ENCODE measurements at regions of chr19 and their contacts with region 1.

Region 1: GRCh38 chr19:58182989-58183816 is at the start of gene ZNF274:
- DNase-seq: peak; percentile 96 to 98
- ATAC-seq: peak; percentile 96
- H3K4me3 ChIP-seq: peak within 1 kb of the TSS; percentile 83
- H3K27ac ChIP-seq: peak within 1 kb of the TSS; percentile 92 to 94
- H3K4me1 ChIP-seq: no peaks in the 10 kb centered on the region
- CTCF ChIP-seq: no peak; the same call in 2 of the 3 replicates
- EP300 ChIP-seq: no peak
- POLR2A ChIP-seq: peak; percentile 72
- RAD21 ChIP-seq: 0 out of 5 replicates have a peak, but pooled peaks of 1 of the 2 experiments have one; percentile 22
- polyA plus RNA-seq, gene ZNF274: 27.3 and 28.7 TPM in 2 replicates

Region 2: DNA sequence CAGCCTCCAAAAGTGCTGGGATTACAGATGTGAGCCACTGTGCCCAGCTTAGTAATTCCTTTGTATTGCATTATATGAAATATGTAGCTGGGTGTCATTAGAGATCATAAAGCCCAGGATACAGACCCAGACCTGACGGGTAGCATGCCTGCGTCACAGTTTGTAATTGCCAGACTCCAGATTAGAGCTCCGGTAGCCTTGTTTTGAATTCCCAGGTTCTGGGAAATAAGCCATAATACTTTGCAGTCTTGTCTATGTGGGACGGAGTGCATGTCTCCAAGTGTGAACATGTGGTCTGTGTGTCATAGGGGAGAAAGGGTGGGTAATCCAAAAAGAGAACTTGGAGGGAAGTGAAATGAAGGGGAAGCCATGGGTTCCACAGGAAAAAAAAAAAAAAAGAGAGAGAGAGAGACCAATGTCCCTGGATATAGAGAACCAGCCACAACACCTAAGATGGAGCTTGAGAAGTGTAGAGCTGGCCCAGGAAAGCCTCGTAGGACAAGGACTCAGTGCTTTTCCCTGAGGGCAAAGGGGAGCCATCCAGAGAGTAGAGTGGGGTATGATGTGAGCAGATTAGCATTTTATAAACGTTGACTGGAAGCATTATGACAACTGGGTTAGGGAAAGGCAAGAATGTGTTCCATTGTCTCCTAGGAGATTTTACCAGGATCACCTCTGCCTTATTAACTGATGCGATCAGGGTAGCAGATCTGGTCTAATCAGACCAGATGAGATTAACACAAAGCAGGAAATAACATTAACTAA is 511.9 kb before region 1 on chr19:
- CTCF ChIA-PET with region 1: no interaction called
- POLR2A ChIA-PET with region 1: interaction called, 10 read pairs
- DNase-seq: no peak
- ATAC-seq: no peak
- H3K4me3 ChIP-seq: no peak overlapping the region
- H3K27ac ChIP-seq: no peak overlapping the region
- H3K4me1 ChIP-seq: no peaks in the 10 kb centered on the region
- CTCF ChIP-seq: no peak
- EP300 ChIP-seq: no peak
- POLR2A ChIP-seq: no peak
- RAD21 ChIP-seq: no peak

Region 3: GRCh38 chr19:58002384-58003173 is 180.6 kb before region 1 on chr19 and contains the start of gene ZNF606:
- CTCF ChIA-PET with region 1: no interaction called
- POLR2A ChIA-PET with region 1: interaction called, 12 read pairs
- DNase-seq: peak; percentile 87 to 95
- ATAC-seq: peak; percentile 99 to 100
- H3K4me3 ChIP-seq: peak within 1 kb of the TSS; percentile 71
- H3K27ac ChIP-seq: peak within 1 kb of the TSS; percentile 80 to 93
- H3K4me1 ChIP-seq: no peaks in the 10 kb centered on the region
- CTCF ChIP-seq: no peak
- EP300 ChIP-seq: no peak
- POLR2A ChIP-seq: peak; percentile 31; the same call in 1 of the 2 replicates
- RAD21 ChIP-seq: no peak
- polyA plus RNA-seq, gene ZNF606: 4.8 and 5.1 TPM in 2 replicates

Region 4: GRCh38 chr19:58513694-58514563 is 330.7 kb after region 1 on chr19:
- CTCF ChIA-PET with region 1: no interaction called
- POLR2A ChIA-PET with region 1: interaction called, 10 read pairs
- DNase-seq: peak; percentile 67 to 92
- ATAC-seq: peak; percentile 57 to 81
- H3K4me3 ChIP-seq: peak overlapping the region; percentile 44
- H3K27ac ChIP-seq: peak overlapping the region; percentile 71 to 86
- H3K4me1 ChIP-seq: peaks cover 15% of the 10 kb centered on the region
- CTCF ChIP-seq: peak; percentile 81
- EP300 ChIP-seq: no peak
- POLR2A ChIP-seq: peak; percentile 89
- RAD21 ChIP-seq: peak; percentile 44 to 57; a peak in 4 of 5 replicates

Measured in A549 (cell line).